MCF 10A (cell line): ENCODE measurements at regions of chr7 and their contacts with region 1.

Region 1: GRCh38 chr7:106041140-106041717 is 70.9 kb downstream of the SYPL1 start:
- DNase-seq: peak; percentile 66
- H3K4me3 Mint-ChIP-seq: no peak overlapping the region
- H3K27ac Mint-ChIP-seq: no peak overlapping the region
- H3K4me1 Mint-ChIP-seq: peaks cover 13% of the 10 kb centered on the region
- H3K27me3 Mint-ChIP-seq: peaks cover 22% of the 10 kb centered on the region
- CTCF ChIP-seq: peak; percentile 59

Region 2: GRCh38 chr7:105531792-105532671 is 509.2 kb before region 1 on chr7 and contains the start of gene RINT1:
- CTCF ChIA-PET with region 1: no interaction called
- POLR2A ChIA-PET with region 1: no interaction called
- intact Hi-C with region 1: loop called (anchors 5 kb)
- DNase-seq: peak; percentile 87
- H3K4me3 Mint-ChIP-seq: peak within 1 kb of the TSS; percentile 93
- H3K27ac Mint-ChIP-seq: peak within 1 kb of the TSS; percentile 89
- H3K4me1 Mint-ChIP-seq: peaks cover 5% of the 10 kb centered on the region
- H3K27me3 Mint-ChIP-seq: no peaks in the 10 kb centered on the region
- CTCF ChIP-seq: peak; percentile 67
- total RNA-seq, gene RINT1: 26.9 and 29.2 TPM in 2 replicates

Region 3: GRCh38 chr7:105664816-105665525 is 376.3 kb before region 1 on chr7:
- CTCF ChIA-PET with region 1: interaction called, 11 read pairs
- POLR2A ChIA-PET with region 1: no interaction called
- intact Hi-C with region 1: no loop called
- DNase-seq: peak; percentile 50
- H3K4me3 Mint-ChIP-seq: no peak overlapping the region
- H3K27ac Mint-ChIP-seq: no peak overlapping the region
- H3K4me1 Mint-ChIP-seq: peaks cover 6% of the 10 kb centered on the region
- H3K27me3 Mint-ChIP-seq: no peaks in the 10 kb centered on the region
- CTCF ChIP-seq: no peak

Region 4: GRCh38 chr7:105752671-105753275 is 288.5 kb before region 1 on chr7:
- CTCF ChIA-PET with region 1: interaction called, 138 read pairs
- POLR2A ChIA-PET with region 1: no interaction called
- intact Hi-C with region 1: no loop called
- DNase-seq: no peak
- H3K4me3 Mint-ChIP-seq: no peak overlapping the region
- H3K27ac Mint-ChIP-seq: no peak overlapping the region
- H3K4me1 Mint-ChIP-seq: no peaks in the 10 kb centered on the region
- H3K27me3 Mint-ChIP-seq: no peaks in the 10 kb centered on the region
- CTCF ChIP-seq: no peak

Region 5: DNA sequence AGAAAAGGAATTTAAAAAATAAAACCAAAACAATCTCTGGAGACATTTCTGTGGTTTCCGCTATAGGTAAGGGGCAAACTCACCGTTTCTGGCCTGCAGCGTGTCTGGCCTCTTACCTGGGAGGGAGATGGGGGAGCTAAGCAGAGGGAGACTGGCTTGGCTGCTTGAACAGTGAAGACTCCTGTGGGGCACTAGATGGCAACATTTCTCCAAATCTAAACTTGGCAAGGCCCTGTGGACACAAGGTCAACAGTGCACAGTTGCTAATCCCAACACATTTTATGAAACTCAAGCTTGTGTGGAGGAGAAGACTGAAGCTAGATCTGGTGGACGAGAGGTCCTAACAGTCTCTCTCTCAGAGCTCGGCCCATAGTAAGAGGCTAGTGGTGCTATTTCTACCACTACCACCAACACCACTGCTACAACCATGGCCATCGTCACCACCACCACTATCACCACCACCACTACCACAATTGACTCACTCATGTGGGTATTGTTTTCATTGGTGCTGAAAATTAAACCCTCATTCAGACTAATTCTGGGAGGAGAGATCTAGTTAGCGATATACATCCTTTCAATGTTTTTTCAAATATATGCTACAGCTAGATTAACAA is 106.5 kb before region 1 on chr7:
- CTCF ChIA-PET with region 1: interaction called, 15 read pairs
- POLR2A ChIA-PET with region 1: interaction called, 3 read pairs
- intact Hi-C with region 1: loop called (anchors 1 kb)
- DNase-seq: peak; percentile 47
- H3K4me3 Mint-ChIP-seq: no peak overlapping the region
- H3K27ac Mint-ChIP-seq: no peak overlapping the region
- H3K4me1 Mint-ChIP-seq: peaks cover 9% of the 10 kb centered on the region
- H3K27me3 Mint-ChIP-seq: no peaks in the 10 kb centered on the region
- CTCF ChIP-seq: peak; percentile 24

Region 6: DNA sequence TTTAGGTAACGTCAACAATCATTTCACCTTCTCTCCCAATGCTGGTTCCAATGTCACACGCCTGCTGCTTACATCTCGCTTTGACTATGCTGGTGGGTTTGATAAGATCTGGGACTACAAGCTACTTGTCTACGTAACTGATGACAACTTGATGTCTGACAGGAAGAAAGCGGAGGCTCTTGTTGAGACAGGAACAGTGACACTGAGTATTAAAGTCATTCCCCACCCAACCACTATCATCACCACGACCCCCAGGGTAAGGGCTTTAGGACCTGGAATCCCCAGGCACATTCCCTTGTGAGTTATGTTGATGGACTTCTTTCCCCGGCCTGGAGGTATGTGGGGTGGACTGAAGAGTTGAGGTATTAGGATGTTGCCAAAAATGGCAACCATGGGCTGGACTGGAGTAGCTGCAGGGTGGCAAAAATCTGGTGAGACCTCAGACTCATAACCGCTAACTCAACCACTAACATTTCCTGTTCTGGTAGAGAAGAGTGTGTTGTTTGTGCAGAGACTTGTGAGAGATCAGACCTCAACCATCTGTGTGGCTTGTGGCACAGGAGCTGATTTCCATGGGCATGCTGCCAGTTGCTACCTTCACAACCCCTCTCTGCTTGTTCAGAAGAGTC is 18.9 kb before region 1 on chr7:
- CTCF ChIA-PET with region 1: interaction called, 46 read pairs
- POLR2A ChIA-PET with region 1: no interaction called
- intact Hi-C with region 1: no loop called
- DNase-seq: no peak
- H3K4me3 Mint-ChIP-seq: no peak overlapping the region
- H3K27ac Mint-ChIP-seq: no peak overlapping the region
- H3K4me1 Mint-ChIP-seq: no peaks in the 10 kb centered on the region
- H3K27me3 Mint-ChIP-seq: no peaks in the 10 kb centered on the region
- CTCF ChIP-seq: no peak